ENCODE measurements at regions of chr11 and their contacts with region 1.

Region 1: DNA sequence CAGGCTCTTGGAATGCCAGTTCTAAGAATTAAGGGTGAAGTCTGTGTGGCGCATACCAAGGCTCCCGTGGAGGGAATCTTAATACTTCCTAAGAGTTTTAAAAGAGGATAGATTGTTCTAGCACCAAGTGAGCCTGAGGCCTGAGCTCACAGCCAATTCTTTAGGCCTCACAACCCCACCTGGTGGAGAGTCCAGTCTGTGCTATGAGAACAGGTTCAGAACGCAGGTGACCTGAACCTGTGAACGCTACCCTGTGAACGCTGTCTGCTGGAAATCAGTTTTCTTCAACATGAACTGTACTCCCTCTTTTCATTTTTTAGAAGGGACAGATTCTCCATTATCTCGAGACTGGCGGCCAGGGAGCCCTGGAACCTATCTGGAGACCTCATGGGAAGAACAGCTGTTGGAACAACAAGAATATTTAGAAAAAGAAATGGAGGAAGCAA is 43.2 kb upstream of the DLAT start:
- DNase-seq: no peak
- ATAC-seq: peak; percentile 73
- H3K4me3 ChIP-seq: no peak overlapping the region
- H3K27ac ChIP-seq: no peak overlapping the region
- H3K4me1 ChIP-seq: peaks cover 6% of the 10 kb centered on the region; the same call in 1 of the 2 replicates
- H3K27me3 ChIP-seq: no peaks in the 10 kb centered on the region
- CTCF ChIP-seq: peak; percentile 86

Region 2: DNA sequence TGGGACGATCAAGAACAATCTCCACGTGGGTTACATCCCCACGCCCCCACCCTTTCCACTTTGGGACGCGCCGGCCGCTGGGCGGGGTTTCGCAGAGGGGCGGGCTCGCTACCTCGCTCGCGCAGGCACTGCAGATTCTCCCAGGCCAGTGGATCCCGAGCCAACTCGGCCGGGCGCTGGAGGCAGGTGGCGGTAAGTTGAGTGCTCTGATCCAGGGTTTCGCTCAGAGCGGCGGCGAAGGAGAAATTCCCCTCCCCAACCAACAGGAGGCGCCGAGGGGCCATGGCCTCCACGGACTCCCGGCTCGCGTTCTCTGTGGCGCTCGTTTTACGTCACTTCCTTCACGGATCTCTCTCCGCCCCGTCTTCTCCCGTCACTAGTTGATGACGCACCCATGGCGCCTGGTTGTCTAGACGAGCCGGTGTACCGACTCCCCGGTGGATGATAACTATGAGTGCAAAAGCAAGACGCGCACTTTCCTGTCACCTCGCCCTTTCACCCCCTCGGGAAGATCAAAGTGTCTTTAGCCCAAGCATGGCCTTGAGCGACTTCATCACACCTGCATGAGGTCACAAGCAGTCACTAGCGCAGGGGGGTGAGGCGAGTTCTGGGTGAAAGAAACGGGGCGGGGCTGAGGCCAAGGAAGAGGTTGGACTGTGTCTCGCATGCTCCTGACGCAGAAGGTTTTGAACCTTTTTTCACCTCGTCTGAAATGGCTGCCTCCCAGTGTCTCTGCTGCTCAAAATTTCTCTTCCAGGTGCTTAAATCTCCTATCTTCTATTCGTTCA is 103.0 kb before region 1 on chr11 and contains the starts of genes CFAP68 and FDXACB1:
- CTCF ChIA-PET with region 1: interaction called, 5 read pairs
- POLR2A ChIA-PET with region 1: interaction called, 6 read pairs
- in situ Hi-C with region 1: no loop called
- intact Hi-C with region 1: loop called (anchors 10 kb)
- DNase-seq: peak; percentile 97
- ATAC-seq: peak; percentile 94
- H3K4me3 ChIP-seq: peak within 1 kb of the TSS; percentile 80 to 90
- H3K27ac ChIP-seq: peak within 1 kb of the TSS; percentile 92
- H3K4me1 ChIP-seq: peaks cover 9% of the 10 kb centered on the region; the same call in 1 of the 2 replicates
- H3K27me3 ChIP-seq: no peaks in the 10 kb centered on the region
- CTCF ChIP-seq: peak; percentile 99
- total RNA-seq, gene CFAP68: 16.6 TPM
- total RNA-seq, gene FDXACB1: 4.1 TPM

Region 3: GRCh38 chr11:111926505-111927391 is 55.3 kb before region 1 on chr11:
- CTCF ChIA-PET with region 1: interaction called, 16 read pairs
- POLR2A ChIA-PET with region 1: no interaction called
- in situ Hi-C with region 1: no loop called
- intact Hi-C with region 1: no loop called
- DNase-seq: peak; percentile 87
- ATAC-seq: peak; percentile 98
- H3K4me3 ChIP-seq: peak overlapping the region; percentile 57 to 81
- H3K27ac ChIP-seq: peak overlapping the region; percentile 96
- H3K4me1 ChIP-seq: peaks cover 15% of the 10 kb centered on the region; the same call in 1 of the 2 replicates
- H3K27me3 ChIP-seq: no peaks in the 10 kb centered on the region
- CTCF ChIP-seq: no peak

Region 4: GRCh38 chr11:111932611-111932950 is 49.5 kb before region 1 on chr11:
- CTCF ChIA-PET with region 1: interaction called, 16 read pairs
- POLR2A ChIA-PET with region 1: no interaction called
- in situ Hi-C with region 1: no loop called
- intact Hi-C with region 1: loop called (anchors 1 kb)
- DNase-seq: no peak
- ATAC-seq: no peak
- H3K4me3 ChIP-seq: no peak overlapping the region
- H3K27ac ChIP-seq: no peak overlapping the region
- H3K4me1 ChIP-seq: peaks cover 10% of the 10 kb centered on the region
- H3K27me3 ChIP-seq: no peaks in the 10 kb centered on the region
- CTCF ChIP-seq: no peak

Region 5: DNA sequence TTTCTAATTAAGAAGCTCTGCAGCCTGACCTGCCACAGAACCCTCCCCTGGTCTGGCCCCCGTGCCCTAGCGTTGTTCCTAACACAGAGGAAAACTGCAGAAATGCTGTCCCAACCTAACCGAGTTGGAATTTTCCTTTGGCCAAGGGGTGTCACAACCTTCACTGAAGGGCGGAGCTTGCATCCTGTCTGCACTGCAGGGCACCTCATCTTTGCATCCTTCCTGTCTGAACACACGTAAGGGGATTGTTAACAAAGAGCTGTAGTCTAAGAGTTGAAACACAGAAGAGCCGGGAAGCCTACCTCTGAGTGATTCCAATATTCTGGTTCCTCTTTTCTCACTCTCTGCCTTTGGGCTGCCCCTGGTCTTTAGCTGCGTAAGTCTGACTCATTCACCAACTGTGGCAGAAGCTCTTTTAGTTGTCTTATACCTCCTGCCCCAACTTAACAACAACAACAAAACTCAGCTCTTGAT is 43.3 kb before region 1 on chr11:
- CTCF ChIA-PET with region 1: interaction called, 12 read pairs
- POLR2A ChIA-PET with region 1: interaction called, 4 read pairs
- in situ Hi-C with region 1: no loop called
- intact Hi-C with region 1: no loop called
- DNase-seq: no peak
- ATAC-seq: 0 out of 2 replicates have a peak, but pooled peaks have one; percentile 7
- H3K4me3 ChIP-seq: peak overlapping the region in 1 of 2 experiments; percentile 6; a peak in 3 of 4 replicates
- H3K27ac ChIP-seq: peak overlapping the region; percentile 30
- H3K4me1 ChIP-seq: peaks cover 22% of the 10 kb centered on the region
- H3K27me3 ChIP-seq: no peaks in the 10 kb centered on the region
- CTCF ChIP-seq: no peak

Region 6: GRCh38 chr11:111960916-111961315 is 21.1 kb before region 1 on chr11:
- CTCF ChIA-PET with region 1: interaction called, 13 read pairs
- POLR2A ChIA-PET with region 1: no interaction called
- in situ Hi-C with region 1: no loop called
- intact Hi-C with region 1: no loop called
- DNase-seq: peak; percentile 53
- ATAC-seq: no peak
- H3K4me3 ChIP-seq: no peak overlapping the region
- H3K27ac ChIP-seq: no peak overlapping the region
- H3K4me1 ChIP-seq: no peaks in the 10 kb centered on the region
- H3K27me3 ChIP-seq: no peaks in the 10 kb centered on the region
- CTCF ChIP-seq: no peak

Region 7: GRCh38 chr11:112156956-112157766 is 175.1 kb after region 1 on chr11:
- CTCF ChIA-PET with region 1: no interaction called
- POLR2A ChIA-PET with region 1: no interaction called
- in situ Hi-C with region 1: no loop called
- intact Hi-C with region 1: no loop called
- DNase-seq: peak; percentile 99
- ATAC-seq: peak; percentile 99
- H3K4me3 ChIP-seq: peak overlapping the region in 1 of 2 experiments; percentile 25; a peak in 1 of 4 replicates
- H3K27ac ChIP-seq: peak overlapping the region; percentile 84
- H3K4me1 ChIP-seq: peaks cover 37% of the 10 kb centered on the region
- H3K27me3 ChIP-seq: no peaks in the 10 kb centered on the region
- CTCF ChIP-seq: no peak

Region 8: DNA sequence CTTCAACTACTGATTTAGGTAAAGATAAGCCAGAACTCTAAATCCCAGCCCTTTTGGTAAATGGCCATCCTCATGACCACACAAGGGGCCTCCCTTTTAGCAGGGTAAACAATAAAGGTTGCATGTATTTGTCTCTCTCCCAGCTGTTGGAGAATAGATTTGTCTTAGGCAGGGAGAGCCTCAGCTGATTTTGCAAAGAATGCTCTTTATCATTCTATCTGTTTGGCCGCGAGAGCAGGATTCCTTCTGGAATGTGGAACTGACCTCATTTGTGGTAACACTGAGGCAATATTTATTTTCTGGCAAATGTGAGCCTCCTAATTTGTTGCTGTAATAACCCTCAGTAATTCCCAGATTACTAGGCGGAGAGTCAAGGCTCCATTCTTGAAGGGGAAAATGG is 259.4 kb after region 1 on chr11:
- CTCF ChIA-PET with region 1: no interaction called
- POLR2A ChIA-PET with region 1: no interaction called
- in situ Hi-C with region 1: no loop called
- intact Hi-C with region 1: no loop called
- DNase-seq: no peak
- ATAC-seq: 0 out of 2 replicates have a peak, but pooled peaks have one; percentile 51
- H3K4me3 ChIP-seq: no peak overlapping the region
- H3K27ac ChIP-seq: no peak overlapping the region
- H3K4me1 ChIP-seq: peaks cover 3% of the 10 kb centered on the region
- H3K27me3 ChIP-seq: no peaks in the 10 kb centered on the region
- CTCF ChIP-seq: no peak

Measured in Panc1 (cell line).